ENCODE measurements at regions of chr1 and their contacts with region 1.

Region 1: DNA sequence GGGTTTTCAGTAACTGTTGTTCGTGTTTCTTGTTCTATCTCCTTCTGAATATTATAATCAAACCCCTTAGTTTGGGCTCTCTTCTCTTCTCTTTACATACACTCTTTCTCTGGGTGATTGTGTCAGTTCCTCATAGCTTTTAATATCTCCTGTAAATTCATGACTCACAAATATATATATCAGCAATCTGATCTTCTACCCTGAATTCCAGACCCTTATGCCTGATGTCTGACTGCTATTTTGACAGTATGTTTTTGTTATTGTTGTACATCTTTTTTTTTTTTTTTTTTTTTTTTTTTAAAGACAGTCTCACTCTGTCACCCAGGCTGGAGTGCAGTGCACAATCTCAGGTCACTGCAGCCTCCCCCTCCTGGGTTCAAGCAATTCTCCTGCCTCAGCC is 70.8 kb upstream of the MPC2 start:
- DNase-seq: no peak
- H3K4me3 ChIP-seq: no peak overlapping the region
- H3K27ac ChIP-seq: no peak overlapping the region
- H3K4me1 ChIP-seq: peaks cover 0 to 5% (median 0%) of the 10 kb centered on the region in 4 donors
- H3K27me3 ChIP-seq: no peaks in the 10 kb centered on the region
- CTCF ChIP-seq: no peak
- EP300 ChIP-seq: no peak
- POLR2A ChIP-seq: no peak

Region 2: GRCh38 chr1:167950569-167950968 is 57.1 kb before region 1 on chr1:
- in situ Hi-C with region 1: no loop called
- intact Hi-C with region 1: loop called (anchors 2 kb)
- DNase-seq: no peak
- H3K4me3 ChIP-seq: no peak overlapping the region
- H3K27ac ChIP-seq: no peak overlapping the region
- H3K4me1 ChIP-seq: peaks cover 11 to 56% (median 32%) of the 10 kb centered on the region in 4 donors
- H3K27me3 ChIP-seq: no peaks in the 10 kb centered on the region
- CTCF ChIP-seq: no peak
- EP300 ChIP-seq: no peak
- POLR2A ChIP-seq: no peak

Region 3: DNA sequence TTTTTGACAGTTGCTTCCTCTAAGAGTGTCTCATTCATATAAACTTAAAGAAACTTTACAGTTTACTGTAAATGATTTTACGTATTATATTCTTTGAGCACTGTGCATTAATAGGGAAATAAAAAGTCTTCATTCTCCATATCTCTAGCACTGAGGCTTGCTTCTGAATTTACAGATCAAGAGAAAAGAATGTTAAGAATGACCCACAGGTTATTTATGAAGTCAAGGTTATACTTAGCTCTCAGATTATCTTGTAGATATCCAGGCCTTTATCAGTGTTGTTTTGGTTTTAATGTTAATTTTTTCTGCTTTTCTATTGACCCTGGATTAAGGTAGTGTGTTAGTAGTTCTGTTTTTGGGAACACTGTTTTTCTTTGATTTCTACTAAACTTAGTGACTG is 37.6 kb after region 1 on chr1:
- in situ Hi-C with region 1: no loop called
- intact Hi-C with region 1: no loop called
- DNase-seq: no peak
- H3K4me3 ChIP-seq: no peak overlapping the region
- H3K27ac ChIP-seq: no peak overlapping the region
- H3K4me1 ChIP-seq: no peaks in the 10 kb centered on the region
- H3K27me3 ChIP-seq: no peaks in the 10 kb centered on the region
- CTCF ChIP-seq: no peak
- EP300 ChIP-seq: no peak
- POLR2A ChIP-seq: no peak

Measured in transverse colon (tissue), 4 donors.